ENCODE measurements at regions of chr7 and their contacts with region 1.

Region 1: GRCh38 chr7:41940760-41941343 is 238.0 kb upstream of the INHBA start:
- DNase-seq: peak; percentile 72
- H3K4me3 ChIP-seq: no peak overlapping the region
- H3K27ac ChIP-seq: no peak overlapping the region
- H3K4me1 ChIP-seq: no peaks in the 10 kb centered on the region
- H3K27me3 ChIP-seq: peaks cover under 1 to 3% of the 10 kb centered on the region in 2 experiments
- CTCF ChIP-seq: peak; percentile 86 to 87
- POLR2A ChIP-seq: no peak

Region 2: GRCh38 chr7:41544241-41544640 is 396.6 kb before region 1 on chr7:
- CTCF ChIA-PET with region 1: no interaction called
- POLR2A ChIA-PET with region 1: no interaction called
- dilution Hi-C with region 1: no loop called
- intact Hi-C with region 1: no loop called
- DNase-seq: no peak
- H3K4me3 ChIP-seq: no peak overlapping the region
- H3K27ac ChIP-seq: no peak overlapping the region
- H3K4me1 ChIP-seq: no peaks in the 10 kb centered on the region
- H3K27me3 ChIP-seq: no peaks in the 10 kb centered on the region
- CTCF ChIP-seq: no peak
- POLR2A ChIP-seq: no peak

Region 3: GRCh38 chr7:41870461-41871138 is 70.3 kb before region 1 on chr7:
- CTCF ChIA-PET with region 1: no interaction called
- POLR2A ChIA-PET with region 1: no interaction called
- dilution Hi-C with region 1: no loop called
- intact Hi-C with region 1: no loop called
- DNase-seq: no peak
- H3K4me3 ChIP-seq: no peak overlapping the region
- H3K27ac ChIP-seq: no peak overlapping the region
- H3K4me1 ChIP-seq: no peaks in the 10 kb centered on the region
- H3K27me3 ChIP-seq: no peaks in the 10 kb centered on the region
- CTCF ChIP-seq: no peak
- POLR2A ChIP-seq: no peak

Region 4: GRCh38 chr7:41916450-41916959 is 24.3 kb before region 1 on chr7:
- CTCF ChIA-PET with region 1: interaction called, 22 read pairs
- POLR2A ChIA-PET with region 1: no interaction called
- dilution Hi-C with region 1: no loop called
- intact Hi-C with region 1: no loop called
- DNase-seq: peak; percentile 86
- H3K4me3 ChIP-seq: peak overlapping the region in 1 of 3 experiments; percentile 4
- H3K27ac ChIP-seq: peak overlapping the region; percentile 84
- H3K4me1 ChIP-seq: peaks cover 24% of the 10 kb centered on the region
- H3K27me3 ChIP-seq: no peaks in the 10 kb centered on the region
- CTCF ChIP-seq: no peak
- POLR2A ChIP-seq: peak; percentile 31

Region 5: GRCh38 chr7:41955893-41956675 is 15.2 kb after region 1 on chr7:
- CTCF ChIA-PET with region 1: interaction called, 59 read pairs
- POLR2A ChIA-PET with region 1: no interaction called
- dilution Hi-C with region 1: no loop called
- intact Hi-C with region 1: loop called (anchors 1 kb)
- DNase-seq: peak; percentile 98
- H3K4me3 ChIP-seq: no peak overlapping the region
- H3K27ac ChIP-seq: no peak overlapping the region
- H3K4me1 ChIP-seq: peaks cover 11% of the 10 kb centered on the region
- H3K27me3 ChIP-seq: peaks cover 0 to under 1% of the 10 kb centered on the region in 2 experiments
- CTCF ChIP-seq: no peak
- POLR2A ChIP-seq: no peak

Region 6: GRCh38 chr7:42151309-42151708 is 210.5 kb after region 1 on chr7:
- CTCF ChIA-PET with region 1: no interaction called
- POLR2A ChIA-PET with region 1: no interaction called
- dilution Hi-C with region 1: no loop called
- intact Hi-C with region 1: no loop called
- DNase-seq: no peak
- H3K4me3 ChIP-seq: no peak overlapping the region
- H3K27ac ChIP-seq: no peak overlapping the region
- H3K4me1 ChIP-seq: no peaks in the 10 kb centered on the region
- H3K27me3 ChIP-seq: no peaks in the 10 kb centered on the region
- CTCF ChIP-seq: no peak
- POLR2A ChIP-seq: no peak

Region 7: DNA sequence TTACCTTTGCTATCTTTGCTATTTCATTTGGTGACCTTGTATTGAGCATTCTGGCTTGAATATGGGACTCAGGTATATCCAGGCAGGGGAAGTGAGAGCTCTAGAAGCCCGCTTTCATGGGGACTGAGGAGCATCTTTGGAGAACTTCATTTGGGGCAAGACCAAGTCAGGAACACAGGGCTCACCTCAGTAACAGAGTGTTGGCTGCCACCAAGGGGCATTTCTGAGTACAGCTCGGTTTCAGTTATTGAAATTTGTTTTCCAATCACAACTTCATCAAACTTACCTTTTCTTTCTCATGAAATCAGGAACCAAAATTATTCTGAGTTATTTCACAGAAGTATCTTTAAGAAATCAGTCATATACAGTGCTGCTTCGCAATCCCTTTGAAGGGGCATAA is 633.8 kb after region 1 on chr7:
- CTCF ChIA-PET with region 1: interaction called, 14 read pairs
- POLR2A ChIA-PET with region 1: no interaction called
- dilution Hi-C with region 1: no loop called
- intact Hi-C with region 1: loop called (anchors 5 kb)
- DNase-seq: no peak
- H3K4me3 ChIP-seq: no peak overlapping the region
- H3K27ac ChIP-seq: no peak overlapping the region
- H3K4me1 ChIP-seq: no peaks in the 10 kb centered on the region
- H3K27me3 ChIP-seq: no peaks in the 10 kb centered on the region
- CTCF ChIP-seq: no peak
- POLR2A ChIP-seq: no peak

Region 8: GRCh38 chr7:42843205-42843800 is 902.5 kb after region 1 on chr7:
- CTCF ChIA-PET with region 1: interaction called, 335 read pairs
- POLR2A ChIA-PET with region 1: no interaction called
- dilution Hi-C with region 1: no loop called
- intact Hi-C with region 1: loop called (anchors 1 kb)
- DNase-seq: peak; percentile 53
- H3K4me3 ChIP-seq: no peak overlapping the region
- H3K27ac ChIP-seq: no peak overlapping the region
- H3K4me1 ChIP-seq: no peaks in the 10 kb centered on the region
- H3K27me3 ChIP-seq: peaks cover 15 to 17% of the 10 kb centered on the region in 2 experiments
- CTCF ChIP-seq: peak; percentile 50 to 61
- POLR2A ChIP-seq: no peak

Region 9: DNA sequence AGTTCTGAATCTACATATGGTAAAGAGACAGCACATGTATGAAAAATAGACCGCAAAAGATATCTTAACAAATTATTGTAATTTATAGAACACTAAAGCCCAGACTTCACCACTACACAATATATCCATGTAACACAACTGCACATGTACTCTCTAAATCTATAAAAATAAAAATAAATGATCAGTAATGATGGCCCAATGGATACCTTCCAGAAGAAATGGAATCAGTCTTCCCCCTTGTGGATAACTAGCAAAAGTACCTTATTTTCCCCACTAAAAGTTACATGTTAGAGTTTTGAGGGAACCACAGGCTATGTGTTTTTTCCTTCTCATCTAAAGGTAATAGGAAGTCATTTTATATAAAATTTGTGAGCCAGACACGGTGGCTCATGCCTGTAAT is 945.3 kb after region 1 on chr7:
- CTCF ChIA-PET with region 1: interaction called, 354 read pairs
- POLR2A ChIA-PET with region 1: no interaction called
- dilution Hi-C with region 1: no loop called
- intact Hi-C with region 1: loop called (anchors 1 kb)
- DNase-seq: no peak
- H3K4me3 ChIP-seq: no peak overlapping the region
- H3K27ac ChIP-seq: no peak overlapping the region
- H3K4me1 ChIP-seq: peaks cover 9% of the 10 kb centered on the region
- H3K27me3 ChIP-seq: peaks cover 1 to 8% of the 10 kb centered on the region in 2 experiments
- CTCF ChIP-seq: no peak
- POLR2A ChIP-seq: no peak

Region 10: GRCh38 chr7:43439631-43440401 is 1499.0 kb after region 1 on chr7:
- CTCF ChIA-PET with region 1: interaction called, 29 read pairs
- POLR2A ChIA-PET with region 1: no interaction called
- dilution Hi-C with region 1: no loop called
- intact Hi-C with region 1: loop called (anchors 2 kb)
- DNase-seq: peak; percentile 37
- H3K4me3 ChIP-seq: no peak overlapping the region
- H3K27ac ChIP-seq: no peak overlapping the region
- H3K4me1 ChIP-seq: no peaks in the 10 kb centered on the region
- H3K27me3 ChIP-seq: peaks cover 0 to 2% of the 10 kb centered on the region in 2 experiments
- CTCF ChIP-seq: peak; percentile 77 to 95
- POLR2A ChIP-seq: no peak

Measured in endothelial cell of umbilical vein (primary cell).